GM12878 (cell line): ENCODE measurements at regions of chr13 and their contacts with region 1.

Region 1: DNA sequence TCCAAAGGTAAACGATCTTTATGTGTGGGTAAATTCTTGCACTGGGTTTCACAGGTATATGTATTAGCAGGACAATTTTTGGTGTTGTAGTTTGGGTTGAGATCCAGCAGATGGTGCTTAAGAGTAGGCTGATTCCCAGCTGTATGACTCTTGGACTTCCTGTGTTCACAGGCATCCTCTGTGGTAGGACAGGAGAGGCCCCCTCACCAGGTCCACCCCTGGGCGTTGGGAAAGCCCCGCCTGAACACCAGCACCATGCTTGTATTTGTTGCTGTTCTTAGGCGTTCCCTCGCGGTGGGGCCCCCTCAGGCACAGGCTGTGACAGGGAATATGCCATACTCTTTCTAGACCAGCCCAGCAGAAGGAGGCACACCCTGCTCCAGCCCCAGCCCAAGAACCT is 49.5 kb upstream of the PCDH17 start:
- DNase-seq: no peak
- ATAC-seq: peak; percentile 58
- H3K4me3 ChIP-seq: no peak overlapping the region
- H3K27ac ChIP-seq: no peak overlapping the region
- H3K4me1 ChIP-seq: no peaks in the 10 kb centered on the region
- H3K27me3 ChIP-seq: no peaks in the 10 kb centered on the region
- CTCF ChIP-seq: peak in 1 of 3 experiments; percentile 13; a peak in 1 of 6 replicates
- EP300 ChIP-seq: no peak
- POLR2A ChIP-seq: no peak
- RAD21 ChIP-seq: no peak

Region 2: DNA sequence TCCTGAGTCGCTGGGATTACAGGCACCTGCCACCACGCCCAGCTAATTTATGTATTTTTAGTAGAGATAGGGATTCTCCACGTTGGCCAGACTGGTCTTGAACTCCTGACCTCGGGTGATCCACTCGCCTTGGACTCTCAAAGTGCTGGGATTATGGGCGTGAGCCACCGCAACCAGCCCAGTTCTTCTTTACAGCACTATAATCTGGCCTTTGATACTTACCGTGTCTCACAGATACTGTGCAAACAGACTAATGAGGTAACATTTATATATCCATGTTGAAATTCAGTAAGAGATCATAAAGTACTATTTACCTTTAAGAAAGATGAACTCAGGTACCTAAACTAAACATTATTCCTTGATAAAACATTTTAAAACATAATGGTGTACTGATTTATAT is 563.1 kb before region 1 on chr13:
- CTCF ChIA-PET with region 1: no interaction called
- POLR2A ChIA-PET with region 1: no interaction called
- RAD21 ChIA-PET with region 1: no interaction called
- SMC1A ChIA-PET with region 1: no interaction called
- in situ Hi-C with region 1: no loop called
- intact Hi-C with region 1: no loop called
- DNase-seq: no peak
- ATAC-seq: no peak
- H3K4me3 ChIP-seq: no peak overlapping the region
- H3K27ac ChIP-seq: no peak overlapping the region
- H3K4me1 ChIP-seq: no peaks in the 10 kb centered on the region
- H3K27me3 ChIP-seq: no peaks in the 10 kb centered on the region
- CTCF ChIP-seq: no peak
- EP300 ChIP-seq: no peak
- POLR2A ChIP-seq: no peak
- RAD21 ChIP-seq: no peak

Region 3: GRCh38 chr13:57470491-57470890 is 111.5 kb before region 1 on chr13:
- CTCF ChIA-PET with region 1: no interaction called
- POLR2A ChIA-PET with region 1: no interaction called
- RAD21 ChIA-PET with region 1: no interaction called
- SMC1A ChIA-PET with region 1: no interaction called
- in situ Hi-C with region 1: no loop called
- intact Hi-C with region 1: no loop called
- DNase-seq: no peak
- ATAC-seq: no peak
- H3K4me3 ChIP-seq: no peak overlapping the region
- H3K27ac ChIP-seq: no peak overlapping the region
- H3K4me1 ChIP-seq: no peaks in the 10 kb centered on the region
- H3K27me3 ChIP-seq: no peaks in the 10 kb centered on the region
- CTCF ChIP-seq: no peak
- EP300 ChIP-seq: no peak
- POLR2A ChIP-seq: no peak
- RAD21 ChIP-seq: no peak

Region 4: DNA sequence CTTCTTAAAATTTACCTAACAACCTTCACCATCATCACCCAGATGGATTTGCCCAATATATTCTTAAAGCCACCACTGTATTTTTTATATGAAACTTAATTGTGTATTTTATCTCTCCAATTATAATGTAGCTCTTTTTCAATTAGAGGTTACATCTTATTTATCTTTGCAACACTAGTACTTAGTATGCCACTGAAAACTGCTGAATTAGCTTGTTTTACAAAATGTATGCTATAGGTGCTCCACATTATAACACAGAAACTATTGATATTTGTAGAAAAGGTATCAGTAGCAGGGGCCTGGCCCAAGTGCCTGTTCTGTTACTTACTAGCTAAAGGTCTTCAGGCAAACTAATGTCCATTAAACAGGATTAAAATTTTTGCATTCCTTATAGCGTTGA is 13.7 kb after region 1 on chr13:
- CTCF ChIA-PET with region 1: interaction called, 14 read pairs
- POLR2A ChIA-PET with region 1: interaction called, 4 read pairs
- RAD21 ChIA-PET with region 1: interaction called, 4 read pairs
- SMC1A ChIA-PET with region 1: interaction called, 12 read pairs
- in situ Hi-C with region 1: no loop called
- intact Hi-C with region 1: no loop called
- DNase-seq: no peak
- ATAC-seq: no peak
- H3K4me3 ChIP-seq: no peak overlapping the region
- H3K27ac ChIP-seq: no peak overlapping the region
- H3K4me1 ChIP-seq: no peaks in the 10 kb centered on the region
- H3K27me3 ChIP-seq: no peaks in the 10 kb centered on the region
- CTCF ChIP-seq: no peak
- EP300 ChIP-seq: no peak
- POLR2A ChIP-seq: no peak
- RAD21 ChIP-seq: no peak

Region 5: GRCh38 chr13:57601536-57601935 is 19.5 kb after region 1 on chr13:
- CTCF ChIA-PET with region 1: interaction called, 14 read pairs
- POLR2A ChIA-PET with region 1: interaction called, 4 read pairs
- RAD21 ChIA-PET with region 1: interaction called, 17 read pairs
- SMC1A ChIA-PET with region 1: interaction called, 12 read pairs
- in situ Hi-C with region 1: no loop called
- intact Hi-C with region 1: no loop called
- DNase-seq: no peak
- ATAC-seq: no peak
- H3K4me3 ChIP-seq: no peak overlapping the region
- H3K27ac ChIP-seq: no peak overlapping the region
- H3K4me1 ChIP-seq: no peaks in the 10 kb centered on the region
- H3K27me3 ChIP-seq: no peaks in the 10 kb centered on the region
- CTCF ChIP-seq: no peak
- EP300 ChIP-seq: no peak
- POLR2A ChIP-seq: no peak
- RAD21 ChIP-seq: no peak

Region 6: DNA sequence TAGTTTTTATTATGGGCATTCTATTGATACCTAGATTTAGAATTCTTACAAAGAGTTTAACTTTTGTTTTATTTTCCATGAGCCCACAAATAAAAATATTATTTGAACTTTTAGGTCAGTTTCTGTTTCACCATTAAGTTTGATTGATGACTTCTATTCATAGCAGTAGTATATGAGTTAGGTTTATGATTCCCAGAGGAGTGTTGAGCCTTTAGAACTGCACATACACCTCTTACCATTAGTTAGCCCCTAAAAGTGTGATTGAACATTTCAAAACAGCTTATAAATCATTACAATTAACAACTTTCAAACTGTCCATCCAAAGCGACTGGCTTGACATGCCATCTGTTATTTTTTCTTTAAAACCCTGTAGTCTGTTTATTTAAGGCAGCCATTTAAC is 30.5 kb after region 1 on chr13:
- CTCF ChIA-PET with region 1: interaction called, 5 read pairs
- POLR2A ChIA-PET with region 1: interaction called, 4 read pairs
- RAD21 ChIA-PET with region 1: interaction called, 31 read pairs
- SMC1A ChIA-PET with region 1: interaction called, 4 read pairs
- in situ Hi-C with region 1: no loop called
- intact Hi-C with region 1: no loop called
- DNase-seq: no peak
- ATAC-seq: peak; percentile 71
- H3K4me3 ChIP-seq: no peak overlapping the region
- H3K27ac ChIP-seq: no peak overlapping the region
- H3K4me1 ChIP-seq: no peaks in the 10 kb centered on the region
- H3K27me3 ChIP-seq: no peaks in the 10 kb centered on the region
- CTCF ChIP-seq: no peak
- EP300 ChIP-seq: no peak
- POLR2A ChIP-seq: no peak
- RAD21 ChIP-seq: no peak

Region 7: DNA sequence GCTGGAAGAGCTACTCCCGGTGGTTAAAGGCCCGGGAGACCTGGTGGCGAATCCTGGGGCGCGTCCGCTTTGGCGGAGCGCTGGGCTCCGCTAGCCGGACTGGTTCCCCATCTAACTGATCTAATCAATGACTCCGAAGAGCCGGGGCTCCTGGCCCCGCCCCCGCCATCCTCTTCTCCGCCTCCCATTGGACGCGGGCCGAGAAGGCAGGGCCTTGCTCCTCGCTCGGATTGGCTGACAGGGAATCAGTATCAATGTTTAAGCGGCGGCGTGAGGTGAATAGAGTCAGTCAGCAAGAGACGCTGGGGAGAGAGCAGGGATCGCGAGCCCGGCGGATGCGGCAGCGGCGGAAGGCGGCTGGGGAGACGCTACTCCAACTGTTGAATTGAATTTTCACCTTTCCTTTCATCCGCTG is 47.8 kb after region 1 on chr13:
- CTCF ChIA-PET with region 1: interaction called, 117 read pairs
- POLR2A ChIA-PET with region 1: interaction called, 12 read pairs
- RAD21 ChIA-PET with region 1: interaction called, 102 read pairs
- SMC1A ChIA-PET with region 1: interaction called, 110 read pairs
- in situ Hi-C with region 1: no loop called
- intact Hi-C with region 1: no loop called
- DNase-seq: no peak
- ATAC-seq: peak; percentile 60
- H3K4me3 ChIP-seq: no peak overlapping the region
- H3K27ac ChIP-seq: no peak overlapping the region
- H3K4me1 ChIP-seq: no peaks in the 10 kb centered on the region
- H3K27me3 ChIP-seq: peaks cover 0 to 8% of the 10 kb centered on the region in 2 experiments; a peak in 2 of 4 replicates
- CTCF ChIP-seq: no peak
- EP300 ChIP-seq: no peak
- POLR2A ChIP-seq: no peak
- RAD21 ChIP-seq: no peak